PC-3 (cell line): ENCODE measurements at regions of chr14 and their contacts with region 1.

Region 1: GRCh38 chr14:70045844-70046535 is 142.8 kb downstream of the SLC8A3 start:
- DNase-seq: peak; percentile 82
- ATAC-seq: peak; percentile 86
- H3K4me3 ChIP-seq: no peak overlapping the region
- H3K27ac ChIP-seq: no peak overlapping the region
- H3K4me1 ChIP-seq: peaks cover 27% of the 10 kb centered on the region; the same call in 1 of the 2 replicates
- H3K27me3 ChIP-seq: peaks cover 11% of the 10 kb centered on the region; the same call in 1 of the 2 replicates
- CTCF ChIP-seq: peak; percentile 93

Region 2: GRCh38 chr14:70073924-70074566 is 28.1 kb after region 1 on chr14:
- CTCF ChIA-PET with region 1: interaction called, 16 read pairs
- POLR2A ChIA-PET with region 1: no interaction called
- intact Hi-C with region 1: loop called (anchors 1 kb)
- DNase-seq: peak; percentile 79
- ATAC-seq: peak; percentile 98
- H3K4me3 ChIP-seq: no peak overlapping the region
- H3K27ac ChIP-seq: no peak overlapping the region
- H3K4me1 ChIP-seq: no peaks in the 10 kb centered on the region
- H3K27me3 ChIP-seq: peaks cover 68% of the 10 kb centered on the region
- CTCF ChIP-seq: peak; percentile 98

Region 3: DNA sequence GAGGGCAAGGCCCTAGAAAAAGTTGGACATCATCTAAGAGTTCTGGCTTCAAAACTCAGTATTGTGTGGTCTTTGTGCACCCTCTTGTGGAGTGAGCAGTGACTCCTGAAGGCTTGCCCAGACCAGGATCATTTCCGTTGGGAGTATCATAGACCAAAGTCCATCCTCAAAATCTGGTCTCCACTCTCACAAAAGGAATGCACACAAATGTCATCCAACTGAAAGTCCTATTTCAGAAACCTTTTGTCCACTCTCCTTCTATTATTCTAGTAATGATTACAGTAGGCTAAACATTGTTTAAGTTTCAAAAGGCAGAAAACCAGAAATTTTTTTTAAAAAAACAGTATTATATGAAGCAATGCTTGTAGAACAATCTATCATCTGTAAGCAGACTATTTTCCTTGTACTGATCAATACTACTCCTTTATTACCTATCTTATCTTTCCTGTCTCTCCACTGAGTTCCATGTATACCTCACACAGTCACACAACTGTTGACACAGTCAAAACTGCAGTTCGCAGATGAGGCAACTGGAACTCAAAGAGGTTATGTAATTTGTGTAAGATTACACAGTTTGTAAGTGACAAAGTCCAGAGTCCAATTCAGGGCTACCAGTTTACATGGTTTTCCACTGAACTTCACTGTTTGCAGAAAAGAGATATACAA is 272.1 kb after region 1 on chr14:
- CTCF ChIA-PET with region 1: no interaction called
- POLR2A ChIA-PET with region 1: no interaction called
- intact Hi-C with region 1: loop called (anchors 1 kb)
- DNase-seq: peak; percentile 73
- ATAC-seq: peak; percentile 90
- H3K4me3 ChIP-seq: no peak overlapping the region
- H3K27ac ChIP-seq: no peak overlapping the region
- H3K4me1 ChIP-seq: no peaks in the 10 kb centered on the region
- H3K27me3 ChIP-seq: peaks cover 13% of the 10 kb centered on the region; the same call in 1 of the 2 replicates
- CTCF ChIP-seq: peak; percentile 82

Region 4: DNA sequence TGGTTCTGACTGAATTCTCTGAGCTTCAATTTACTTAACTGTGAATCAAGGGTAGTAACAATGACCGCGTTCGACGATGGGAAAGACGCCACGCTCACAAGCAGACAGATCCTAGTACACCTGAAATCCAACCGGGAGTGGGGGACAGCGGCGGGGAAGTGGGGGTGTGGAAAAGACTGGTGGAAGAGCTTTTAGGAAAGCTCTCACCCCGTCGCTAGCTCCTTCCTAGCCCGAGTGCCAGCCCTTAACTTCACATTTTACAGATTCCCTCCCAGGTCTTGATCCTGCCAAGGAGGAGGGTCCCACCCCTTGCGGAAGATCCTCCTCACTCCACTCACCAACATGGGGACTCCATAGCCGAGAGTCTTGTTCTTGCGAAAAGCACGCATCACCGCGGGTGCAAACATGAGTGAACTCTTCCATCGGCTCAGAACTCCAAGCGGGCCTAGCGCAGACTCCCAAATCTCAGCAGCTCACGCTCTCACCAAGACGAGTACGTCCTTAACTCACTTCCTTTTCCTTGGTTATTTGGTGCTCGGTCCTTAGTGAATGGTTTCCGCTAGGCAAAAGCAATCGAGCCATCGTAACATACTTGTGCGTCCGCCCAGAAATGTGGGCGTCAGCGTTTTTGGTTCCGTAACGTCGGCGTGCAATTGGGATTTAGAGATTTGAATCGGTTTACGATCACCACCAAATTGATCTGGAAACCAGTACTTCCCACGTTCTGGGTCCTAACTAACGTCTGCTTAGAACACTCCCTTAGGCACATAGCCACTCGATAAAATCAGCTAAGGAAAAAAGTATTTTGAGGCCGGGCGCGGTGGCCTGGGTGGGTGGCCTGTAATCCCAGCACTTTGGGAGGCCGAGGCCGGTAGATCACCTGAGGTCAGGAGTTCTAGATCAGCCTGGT is 313.4 kb after region 1 on chr14 and contains the start of gene COX16:
- CTCF ChIA-PET with region 1: no interaction called
- POLR2A ChIA-PET with region 1: no interaction called
- intact Hi-C with region 1: loop called (anchors 1 kb)
- DNase-seq: peak; percentile 96
- ATAC-seq: peak; percentile 93
- H3K4me3 ChIP-seq: peak within 1 kb of the TSS; percentile 88
- H3K27ac ChIP-seq: peak within 1 kb of the TSS; percentile 71
- H3K4me1 ChIP-seq: peaks cover 19% of the 10 kb centered on the region
- H3K27me3 ChIP-seq: no peaks in the 10 kb centered on the region
- CTCF ChIP-seq: no peak
- total RNA-seq, gene COX16: 54.1 and 60.1 TPM in 2 replicates

Region 5: GRCh38 chr14:70398706-70399431 is 352.9 kb after region 1 on chr14:
- CTCF ChIA-PET with region 1: no interaction called
- POLR2A ChIA-PET with region 1: no interaction called
- intact Hi-C with region 1: loop called (anchors 5 kb)
- DNase-seq: no peak
- ATAC-seq: no peak
- H3K4me3 ChIP-seq: no peak overlapping the region
- H3K27ac ChIP-seq: no peak overlapping the region
- H3K4me1 ChIP-seq: no peaks in the 10 kb centered on the region; the same call in 1 of the 2 replicates
- H3K27me3 ChIP-seq: no peaks in the 10 kb centered on the region
- CTCF ChIP-seq: no peak

Region 6: GRCh38 chr14:70567791-70568190 is 521.8 kb after region 1 on chr14:
- CTCF ChIA-PET with region 1: no interaction called
- POLR2A ChIA-PET with region 1: no interaction called
- intact Hi-C with region 1: loop called (anchors 5 kb)
- DNase-seq: peak; percentile 70
- ATAC-seq: peak; percentile 97
- H3K4me3 ChIP-seq: no peak overlapping the region
- H3K27ac ChIP-seq: no peak overlapping the region
- H3K4me1 ChIP-seq: no peaks in the 10 kb centered on the region
- H3K27me3 ChIP-seq: no peaks in the 10 kb centered on the region
- CTCF ChIP-seq: peak; percentile 90

Region 7: GRCh38 chr14:70585219-70585618 is 539.2 kb after region 1 on chr14:
- CTCF ChIA-PET with region 1: no interaction called
- POLR2A ChIA-PET with region 1: no interaction called
- intact Hi-C with region 1: loop called (anchors 1 kb)
- DNase-seq: peak; percentile 11
- ATAC-seq: peak; percentile 61
- H3K4me3 ChIP-seq: no peak overlapping the region
- H3K27ac ChIP-seq: no peak overlapping the region
- H3K4me1 ChIP-seq: no peaks in the 10 kb centered on the region
- H3K27me3 ChIP-seq: no peaks in the 10 kb centered on the region
- CTCF ChIP-seq: no peak; the same call in 1 of the 2 replicates